Endothelial cell of umbilical vein (primary cell): ENCODE measurements at regions of chr7 and their contacts with region 1.

Region 1: GRCh38 chr7:71733107-71733870 is 601.3 kb downstream of the GALNT17 start:
- DNase-seq: peak; percentile 14
- H3K4me3 ChIP-seq: no peak overlapping the region
- H3K27ac ChIP-seq: no peak overlapping the region
- H3K4me1 ChIP-seq: no peaks in the 10 kb centered on the region
- H3K27me3 ChIP-seq: no peaks in the 10 kb centered on the region
- CTCF ChIP-seq: peak; percentile 72 to 80
- POLR2A ChIP-seq: no peak

Region 2: DNA sequence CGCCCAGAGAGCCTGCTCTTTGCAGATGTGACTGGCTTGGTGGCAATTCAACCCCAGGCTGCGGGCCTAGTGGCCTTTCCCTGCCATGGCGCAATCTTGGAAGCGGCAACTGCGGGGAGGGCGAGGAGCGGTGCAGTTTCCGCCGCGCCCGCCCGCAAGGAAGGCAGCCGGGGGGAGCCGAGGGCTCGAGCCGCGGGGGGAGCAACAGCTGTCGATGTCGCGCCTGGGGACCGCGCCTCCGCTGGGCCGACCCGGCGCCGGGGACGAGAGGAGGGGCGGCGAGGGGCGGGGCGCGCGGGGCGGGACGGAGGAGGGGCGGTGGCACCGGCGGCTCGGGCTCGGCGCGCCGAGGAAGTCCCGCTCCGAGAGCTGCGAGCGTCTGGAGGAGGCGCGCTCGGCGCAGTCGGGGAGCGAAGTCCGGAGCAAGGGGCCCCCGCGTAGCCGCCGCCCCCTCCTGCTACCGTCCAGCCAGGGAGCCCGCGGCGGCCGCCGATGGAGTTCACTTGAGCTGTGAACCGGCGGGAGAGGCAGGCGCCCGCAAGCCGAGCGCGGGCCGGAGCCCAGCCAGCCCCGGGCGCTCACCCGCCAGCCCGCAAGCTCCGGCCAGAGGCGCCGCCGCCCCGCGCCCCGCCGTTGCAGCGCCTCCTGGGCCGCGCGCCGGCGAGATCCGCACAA is 1039.5 kb before region 1 on chr7:
- CTCF ChIA-PET with region 1: no interaction called
- POLR2A ChIA-PET with region 1: no interaction called
- dilution Hi-C with region 1: no loop called
- intact Hi-C with region 1: loop called (anchors 10 kb)
- DNase-seq: no peak
- H3K4me3 ChIP-seq: peak overlapping the region in 2 of 3 experiments; percentile 25 to 27
- H3K27ac ChIP-seq: no peak overlapping the region
- H3K4me1 ChIP-seq: no peaks in the 10 kb centered on the region
- H3K27me3 ChIP-seq: peaks cover 22% of the 10 kb centered on the region in 2 experiments
- CTCF ChIP-seq: no peak
- POLR2A ChIP-seq: no peak

Region 3: GRCh38 chr7:70829221-70830059 is 903.8 kb before region 1 on chr7:
- CTCF ChIA-PET with region 1: interaction called, 28 read pairs
- POLR2A ChIA-PET with region 1: no interaction called
- dilution Hi-C with region 1: no loop called
- intact Hi-C with region 1: loop called (anchors 1 kb)
- DNase-seq: peak; percentile 24
- H3K4me3 ChIP-seq: no peak overlapping the region
- H3K27ac ChIP-seq: no peak overlapping the region
- H3K4me1 ChIP-seq: no peaks in the 10 kb centered on the region
- H3K27me3 ChIP-seq: no peaks in the 10 kb centered on the region
- CTCF ChIP-seq: peak; percentile 63 to 84
- POLR2A ChIP-seq: no peak

Region 4: DNA sequence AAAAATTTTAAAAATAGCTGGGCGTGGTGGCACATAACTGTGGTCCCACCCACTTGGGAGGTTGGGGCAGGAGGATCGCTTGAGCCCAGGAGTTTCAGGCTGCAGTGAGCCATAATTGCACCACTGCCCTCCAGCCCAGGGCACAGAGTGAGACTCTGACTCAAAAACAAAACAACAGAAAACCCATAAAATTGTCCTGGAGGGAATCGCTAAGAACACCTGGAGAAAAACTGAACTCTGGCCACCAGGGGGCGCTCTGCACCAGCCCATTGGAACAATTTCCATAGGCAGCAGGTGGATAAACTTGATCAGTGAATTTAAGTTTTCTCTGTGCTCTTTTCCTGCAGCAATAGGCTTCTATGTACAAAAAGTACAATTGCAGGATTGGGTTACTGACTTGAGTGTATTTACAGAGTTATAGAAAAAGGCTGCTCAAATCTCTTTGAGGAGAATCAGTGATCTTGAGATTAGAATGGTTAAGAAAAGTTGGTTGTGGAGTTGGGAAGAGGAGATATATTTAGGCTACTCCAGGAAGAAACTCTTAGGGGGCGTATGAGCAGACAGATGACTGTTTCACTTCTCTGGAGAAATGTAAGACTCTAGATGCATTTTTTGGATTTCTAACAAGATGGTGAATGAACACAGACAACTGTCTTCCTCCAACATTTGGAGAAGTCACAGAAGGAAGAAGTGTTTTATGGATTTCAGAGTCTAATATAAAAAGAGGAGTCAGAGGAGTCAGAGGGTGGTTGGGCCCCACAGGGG is 876.2 kb before region 1 on chr7:
- CTCF ChIA-PET with region 1: interaction called, 9 read pairs
- POLR2A ChIA-PET with region 1: no interaction called
- dilution Hi-C with region 1: no loop called
- intact Hi-C with region 1: loop called (anchors 1 kb)
- DNase-seq: peak; percentile 16
- H3K4me3 ChIP-seq: no peak overlapping the region
- H3K27ac ChIP-seq: no peak overlapping the region
- H3K4me1 ChIP-seq: no peaks in the 10 kb centered on the region
- H3K27me3 ChIP-seq: no peaks in the 10 kb centered on the region
- CTCF ChIP-seq: peak; percentile 60 to 67
- POLR2A ChIP-seq: no peak